ENCODE measurements at regions of chr2 and their contacts with region 1.

Region 1: GRCh38 chr2:7031547-7032245 is 114.5 kb downstream of the RNF144A start:
- DNase-seq: no peak
- ATAC-seq: peak in 1 of 2 donors; percentile 20

Region 2: GRCh38 chr2:6917071-6917760 is 114.5 kb before region 1 on chr2 and contains the start of gene RNF144A:
- intact Hi-C with region 1: loop called (anchors 5 kb)
- DNase-seq: peak; percentile 61
- ATAC-seq: peak; percentile 88 to 96
- total RNA-seq, gene RNF144A: 4.4 to 10.4 TPM

Region 3: GRCh38 chr2:8441986-8442385 is 1410.3 kb after region 1 on chr2:
- intact Hi-C with region 1: no loop called
- DNase-seq: no peak
- ATAC-seq: no peak

Measured in left cardiac atrium (tissue), 4 donors.